CD4-positive, alpha-beta T cell (primary cell): ENCODE measurements at regions of chr9 and their contacts with region 1.

Region 1: DNA sequence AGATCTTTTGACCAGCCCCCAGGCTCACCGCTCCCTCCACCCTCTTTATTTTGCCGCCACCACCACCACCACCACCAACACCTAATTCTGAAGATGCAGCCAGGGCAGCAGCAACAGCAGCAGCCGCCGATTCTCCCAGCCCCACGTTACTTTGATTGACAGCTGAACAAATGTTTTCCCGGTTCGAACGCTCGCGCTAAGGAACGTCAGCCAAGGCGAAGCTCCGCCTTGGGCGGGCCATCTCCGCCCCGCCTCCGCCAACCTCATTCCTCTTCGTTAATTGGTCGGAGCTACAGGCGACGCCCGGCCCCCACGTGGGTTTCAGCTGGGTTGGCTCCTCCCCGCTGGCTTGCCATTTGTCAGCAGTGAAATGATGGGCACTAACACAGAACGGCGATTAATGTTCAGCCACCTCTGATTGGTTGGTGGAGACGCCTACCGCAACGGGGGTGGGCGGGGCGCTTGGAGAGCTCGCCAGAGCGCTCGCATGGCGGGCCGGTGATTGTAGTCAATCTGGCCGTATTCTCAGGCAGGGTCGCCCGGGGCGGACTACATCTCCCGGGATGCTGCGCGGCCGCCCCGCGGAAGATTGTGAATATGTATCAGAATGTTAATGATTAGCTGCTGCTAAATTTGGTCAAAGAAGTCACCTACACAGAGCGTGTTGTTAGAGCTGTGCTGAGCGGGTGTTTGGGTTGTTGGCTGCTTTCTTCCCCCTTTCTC is at the start of gene TLE4:
- DNase-seq: peak; percentile 98 to 100 (median 99)
- ATAC-seq: peak; percentile 85
- H3K4me3 ChIP-seq: peak within 1 kb of the TSS; percentile 91
- H3K4me3 Mint-ChIP-seq: peak within 1 kb of the TSS; percentile 86
- H3K27ac ChIP-seq: peak within 1 kb of the TSS; percentile 72 to 85
- H3K27ac Mint-ChIP-seq: peak within 1 kb of the TSS; percentile 92
- H3K4me1 ChIP-seq: peaks cover 17% of the 10 kb centered on the region
- H3K4me1 Mint-ChIP-seq: peaks cover 33% of the 10 kb centered on the region
- H3K27me3 ChIP-seq: peaks cover 0 to 9% of the 10 kb centered on the region in 2 experiments
- H3K27me3 Mint-ChIP-seq: peaks cover 4% of the 10 kb centered on the region
- CTCF ChIP-seq: no peak
- total RNA-seq, gene TLE4: 125 to 136 TPM

Region 2: DNA sequence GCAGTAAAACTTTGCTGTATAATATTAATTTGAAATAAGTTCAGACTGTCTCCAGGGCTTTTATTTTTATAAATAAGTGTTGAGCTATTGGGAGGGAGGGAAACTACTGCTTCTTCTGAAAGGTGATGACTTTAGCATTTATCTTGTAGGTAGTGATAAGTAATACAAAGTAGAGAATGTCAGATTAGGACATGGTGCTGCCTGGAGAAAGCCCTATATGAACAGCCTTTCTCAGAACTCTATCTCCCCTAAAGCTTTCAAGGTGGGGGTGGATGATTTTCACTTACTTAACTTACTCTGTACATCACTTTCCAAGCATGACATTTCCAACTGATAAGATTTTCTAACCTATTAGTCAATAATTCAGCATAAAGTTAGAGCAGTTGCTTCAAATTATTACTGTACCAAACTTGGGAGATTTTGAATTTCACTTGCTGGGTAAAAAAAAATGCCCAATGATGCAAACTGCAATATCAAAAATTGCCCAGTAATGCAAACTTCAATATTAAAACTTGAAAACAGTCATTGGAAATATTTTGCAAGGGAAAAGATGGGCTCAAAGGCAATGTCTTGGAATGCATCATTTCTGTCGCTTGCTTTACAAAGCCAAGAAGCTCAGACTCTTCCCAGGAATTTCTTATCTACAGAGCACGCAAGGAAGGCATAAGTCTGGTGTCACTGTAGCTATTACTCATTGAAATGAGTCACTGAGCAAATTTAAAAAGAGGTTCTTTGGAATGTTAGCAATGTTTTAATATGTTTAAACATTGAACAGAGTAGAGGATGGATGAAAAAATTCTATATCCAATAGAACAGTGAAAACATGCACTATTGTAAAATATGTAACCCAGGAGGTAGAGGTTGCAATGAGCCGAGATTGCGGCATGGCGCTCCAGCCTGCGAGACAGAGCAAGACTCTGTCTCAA is 705.0 kb before region 1 on chr9:
- CTCF ChIA-PET with region 1: no interaction called
- POLR2A ChIA-PET with region 1: no interaction called
- intact Hi-C with region 1: no loop called
- DNase-seq: no peak
- ATAC-seq: no peak
- H3K4me3 ChIP-seq: no peak overlapping the region
- H3K4me3 Mint-ChIP-seq: no peak overlapping the region
- H3K27ac ChIP-seq: no peak overlapping the region
- H3K27ac Mint-ChIP-seq: no peak overlapping the region
- H3K4me1 ChIP-seq: no peaks in the 10 kb centered on the region
- H3K4me1 Mint-ChIP-seq: no peaks in the 10 kb centered on the region
- H3K27me3 ChIP-seq: no peaks in the 10 kb centered on the region
- H3K27me3 Mint-ChIP-seq: no peaks in the 10 kb centered on the region
- CTCF ChIP-seq: no peak

Region 3: DNA sequence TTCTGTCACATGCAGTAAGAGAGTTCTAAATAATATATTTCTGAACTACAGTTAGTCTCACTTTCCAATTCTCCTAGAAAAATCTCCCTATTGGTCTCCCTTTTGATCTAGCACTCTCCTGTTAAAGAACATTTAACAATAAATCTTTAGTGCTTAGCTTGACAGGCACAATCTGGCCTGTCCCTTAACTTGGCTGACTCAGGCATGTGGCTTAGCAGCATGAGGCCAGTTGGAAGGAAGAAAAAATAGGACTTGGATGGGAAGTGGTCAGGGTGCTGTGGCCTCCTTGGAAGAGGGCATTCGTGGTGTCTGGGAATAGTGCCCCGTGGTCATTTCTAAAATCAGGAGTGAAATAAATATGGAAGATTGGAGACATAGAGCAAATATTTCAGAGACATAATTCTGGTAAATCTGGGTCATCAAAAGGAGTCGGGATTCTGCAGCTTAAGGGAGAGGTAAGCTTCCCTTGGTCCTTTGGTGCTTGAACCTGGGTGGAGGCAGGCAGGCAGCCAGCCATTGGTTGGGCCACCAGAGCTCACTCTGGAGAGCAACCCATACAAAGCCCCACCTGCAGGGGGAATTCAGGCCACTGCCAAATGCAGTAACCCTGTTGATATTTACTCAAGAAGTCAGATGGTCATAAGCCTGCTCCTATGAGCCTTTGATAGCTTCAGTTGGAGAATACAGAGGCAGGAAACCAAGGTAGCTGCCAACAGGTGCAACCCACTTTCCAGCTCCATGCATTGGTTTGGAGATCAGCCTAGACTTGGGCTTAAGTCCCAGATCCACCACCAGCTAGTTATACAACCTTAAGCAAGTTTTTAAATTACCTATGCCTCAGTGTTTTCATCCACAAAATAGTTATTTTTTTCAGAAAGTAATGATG is 28.5 kb before region 1 on chr9:
- CTCF ChIA-PET with region 1: no interaction called
- POLR2A ChIA-PET with region 1: interaction called, 27 read pairs
- intact Hi-C with region 1: loop called in 1 of 2 experiments (anchors 1 kb)
- DNase-seq: no peak
- ATAC-seq: no peak
- H3K4me3 ChIP-seq: no peak overlapping the region
- H3K4me3 Mint-ChIP-seq: no peak overlapping the region
- H3K27ac ChIP-seq: no peak overlapping the region
- H3K27ac Mint-ChIP-seq: peak overlapping the region; percentile 70
- H3K4me1 ChIP-seq: peaks cover 2% of the 10 kb centered on the region
- H3K4me1 Mint-ChIP-seq: peaks cover 24% of the 10 kb centered on the region
- H3K27me3 ChIP-seq: no peaks in the 10 kb centered on the region
- H3K27me3 Mint-ChIP-seq: no peaks in the 10 kb centered on the region
- CTCF ChIP-seq: no peak

Region 4: DNA sequence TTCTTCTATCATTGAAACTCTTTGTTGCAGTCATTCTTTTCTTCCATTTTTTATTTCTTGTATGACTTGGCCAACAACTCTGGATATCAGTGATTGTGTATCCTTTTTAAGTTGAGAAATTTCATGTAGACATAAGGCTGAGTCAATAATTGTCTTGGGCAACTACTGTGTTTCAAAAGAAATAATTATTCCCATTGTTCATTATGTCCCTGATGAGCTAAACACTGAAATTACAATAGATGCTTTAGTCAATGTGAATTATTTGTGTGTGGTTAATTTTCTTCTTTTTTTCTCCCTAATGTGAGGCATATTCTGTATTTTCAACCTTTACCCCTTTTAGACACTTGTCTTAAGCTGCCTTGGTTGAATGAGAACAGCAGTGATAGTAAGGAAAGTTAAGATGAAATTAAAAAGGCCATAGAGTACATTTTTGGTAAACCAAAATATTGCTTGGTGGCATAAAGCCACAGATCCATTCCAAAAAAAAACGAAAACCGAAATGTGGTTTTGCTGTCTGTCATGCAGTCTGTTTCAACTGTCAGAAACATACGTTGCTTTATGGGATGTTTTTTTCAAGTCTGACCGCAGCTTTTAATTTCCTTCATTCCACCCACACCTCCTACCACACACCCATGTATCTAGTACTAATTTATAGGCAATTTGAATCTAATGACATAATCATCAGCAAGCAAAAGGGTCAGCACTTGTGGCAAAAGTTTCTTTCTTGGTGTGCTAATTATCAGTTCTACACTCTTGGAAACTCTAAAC is 21.4 kb after region 1 on chr9:
- CTCF ChIA-PET with region 1: no interaction called
- POLR2A ChIA-PET with region 1: interaction called, 132 read pairs
- intact Hi-C with region 1: no loop called
- DNase-seq: peak in 4 of 14 experiments; percentile 26 to 75 (median 63)
- ATAC-seq: peak; percentile 91
- H3K4me3 ChIP-seq: no peak overlapping the region
- H3K4me3 Mint-ChIP-seq: peak overlapping the region; percentile 76
- H3K27ac ChIP-seq: no peak overlapping the region
- H3K27ac Mint-ChIP-seq: peak overlapping the region; percentile 72
- H3K4me1 ChIP-seq: peaks cover 14% of the 10 kb centered on the region
- H3K4me1 Mint-ChIP-seq: peaks cover 87% of the 10 kb centered on the region
- H3K27me3 ChIP-seq: no peaks in the 10 kb centered on the region
- H3K27me3 Mint-ChIP-seq: no peaks in the 10 kb centered on the region
- CTCF ChIP-seq: no peak

Region 5: GRCh38 chr9:79630521-79631403 is 59.3 kb after region 1 on chr9:
- CTCF ChIA-PET with region 1: no interaction called
- POLR2A ChIA-PET with region 1: interaction called, 29 read pairs
- intact Hi-C with region 1: no loop called
- DNase-seq: peak in 1 of 14 experiments; percentile 50
- ATAC-seq: no peak
- H3K4me3 ChIP-seq: no peak overlapping the region
- H3K4me3 Mint-ChIP-seq: no peak overlapping the region
- H3K27ac ChIP-seq: no peak overlapping the region
- H3K27ac Mint-ChIP-seq: no peak overlapping the region
- H3K4me1 ChIP-seq: peaks cover 18% of the 10 kb centered on the region
- H3K4me1 Mint-ChIP-seq: peaks cover 75% of the 10 kb centered on the region
- H3K27me3 ChIP-seq: no peaks in the 10 kb centered on the region
- H3K27me3 Mint-ChIP-seq: no peaks in the 10 kb centered on the region
- CTCF ChIP-seq: no peak

Region 6: DNA sequence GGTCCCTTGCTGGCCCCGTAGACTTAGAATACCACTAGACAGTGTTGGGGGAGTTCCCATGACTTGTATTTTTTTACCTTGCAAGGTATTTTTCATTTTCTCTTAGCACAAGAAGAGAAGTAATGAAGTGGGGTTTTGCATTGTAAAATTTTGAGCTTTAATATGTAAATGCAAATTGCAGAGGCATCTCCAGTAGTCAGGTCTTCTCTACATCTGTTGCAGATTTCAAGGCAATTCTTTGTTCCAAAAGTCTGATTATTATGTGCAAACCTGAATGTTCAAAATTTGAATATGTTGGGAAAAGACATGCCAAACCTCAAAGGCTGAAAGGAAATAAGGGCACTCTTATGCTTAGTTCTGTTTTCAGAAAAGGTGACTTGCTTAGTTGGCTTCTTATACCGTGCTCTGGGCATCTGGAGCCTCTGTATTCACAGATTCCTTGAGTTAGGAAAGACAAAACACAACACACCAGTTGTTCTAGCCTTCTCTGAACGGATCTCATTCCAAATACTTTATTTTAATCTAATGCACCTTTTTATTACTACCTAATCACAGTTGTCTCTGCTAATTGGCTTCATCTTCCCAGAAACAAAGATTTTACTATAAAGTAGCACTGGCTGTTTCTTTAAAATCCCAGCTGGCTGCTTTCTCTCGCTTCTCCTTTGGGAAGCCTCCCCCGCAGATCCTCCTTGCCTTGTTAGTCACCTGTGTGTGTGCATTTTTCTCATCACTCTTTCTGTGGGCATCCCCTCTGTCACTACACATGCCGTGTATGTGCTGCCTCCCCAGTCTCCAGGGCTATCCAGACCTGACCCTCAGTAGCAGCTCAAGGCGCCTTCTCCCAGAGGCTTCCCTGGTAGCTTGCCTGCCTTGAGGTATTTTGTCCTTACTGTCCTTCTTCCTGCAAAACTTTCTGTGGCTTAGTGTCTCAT is 138.5 kb after region 1 on chr9:
- CTCF ChIA-PET with region 1: interaction called, 3 read pairs
- POLR2A ChIA-PET with region 1: interaction called, 5 read pairs
- intact Hi-C with region 1: loop called in 1 of 2 experiments (anchors 5 kb)
- DNase-seq: no peak
- ATAC-seq: no peak
- H3K4me3 ChIP-seq: no peak overlapping the region
- H3K4me3 Mint-ChIP-seq: no peak overlapping the region
- H3K27ac ChIP-seq: no peak overlapping the region
- H3K27ac Mint-ChIP-seq: no peak overlapping the region
- H3K4me1 ChIP-seq: no peaks in the 10 kb centered on the region
- H3K4me1 Mint-ChIP-seq: no peaks in the 10 kb centered on the region
- H3K27me3 ChIP-seq: no peaks in the 10 kb centered on the region
- H3K27me3 Mint-ChIP-seq: no peaks in the 10 kb centered on the region
- CTCF ChIP-seq: no peak